Thyroid gland (tissue), 4 donors: ENCODE measurements at regions of chr16 and their contacts with region 1.

Region 1: GRCh38 chr16:83233153-83233552 is 574.6 kb upstream of the HSBP1 start:
- DNase-seq: no peak
- H3K4me3 ChIP-seq: no peak overlapping the region
- H3K27ac ChIP-seq: no peak overlapping the region
- H3K4me1 ChIP-seq: no peaks in the 10 kb centered on the region
- H3K27me3 ChIP-seq: no peaks in the 10 kb centered on the region
- CTCF ChIP-seq: no peak
- POLR2A ChIP-seq: no peak

Region 2: DNA sequence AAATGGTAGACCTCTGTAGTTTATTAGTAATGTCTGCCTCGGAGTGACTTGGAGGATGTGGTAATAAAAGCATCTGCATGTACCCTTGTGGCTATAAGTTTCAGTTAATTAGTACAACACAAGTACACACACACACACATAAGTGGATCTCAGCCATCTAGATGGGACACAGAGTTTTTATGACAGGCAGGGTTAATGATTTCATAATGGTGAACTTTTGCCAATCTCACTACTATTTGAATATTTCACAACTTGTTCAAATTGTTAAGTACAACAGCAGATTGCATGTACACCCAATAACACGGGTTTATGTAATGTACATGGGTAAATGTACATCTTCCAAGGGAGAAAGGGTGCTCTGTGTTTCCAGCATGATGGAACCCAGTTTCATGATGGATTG is 63.4 kb after region 1 on chr16:
- intact Hi-C with region 1: loop called (anchors 10 kb)
- DNase-seq: no peak
- H3K4me3 ChIP-seq: no peak overlapping the region
- H3K27ac ChIP-seq: no peak overlapping the region
- H3K4me1 ChIP-seq: peaks cover 4 to 12% of the 10 kb centered on the region in 2 donors
- H3K27me3 ChIP-seq: no peaks in the 10 kb centered on the region
- CTCF ChIP-seq: no peak
- POLR2A ChIP-seq: no peak